Activated B cell treated with CpG ODN at 0.5 μM for 24 hours (primary cell): ENCODE measurements at regions of chr4 and their contacts with region 1.

Region 1: DNA sequence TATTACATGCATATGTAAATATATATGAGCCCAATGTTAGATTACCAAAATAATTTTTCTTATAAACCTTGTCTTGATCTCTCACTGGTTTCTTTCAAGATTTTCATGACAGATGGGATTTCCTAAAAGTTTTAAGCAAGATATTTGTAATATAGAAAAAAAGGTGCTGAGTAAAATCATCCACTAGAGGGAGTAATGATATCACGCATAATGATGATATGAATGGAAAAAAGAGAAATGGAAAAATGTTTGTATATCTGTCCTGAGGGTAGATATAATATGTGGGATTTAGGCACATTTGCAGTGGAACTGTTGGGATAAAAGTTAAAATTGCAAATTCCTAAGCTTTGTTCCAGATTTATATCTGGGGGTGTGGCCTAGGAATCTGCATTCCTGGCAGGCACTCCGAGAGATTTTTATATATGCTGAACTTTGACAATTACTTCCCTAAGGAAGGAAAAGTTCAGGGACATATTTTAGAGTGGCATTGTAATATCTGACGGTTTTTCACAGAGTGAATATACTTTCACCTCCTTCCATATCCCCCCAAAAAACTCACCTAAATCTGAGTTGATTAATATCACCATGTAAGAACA is 60.5 kb downstream of the TMA16 start:
- DNase-seq: no peak
- ATAC-seq: no peak
- H3K4me3 Mint-ChIP-seq: no peak overlapping the region
- H3K27ac Mint-ChIP-seq: peak overlapping the region; percentile 84
- H3K4me1 Mint-ChIP-seq: peaks cover 85% of the 10 kb centered on the region
- H3K27me3 Mint-ChIP-seq: no peaks in the 10 kb centered on the region
- CTCF ChIP-seq: peak; percentile 61

Region 2: DNA sequence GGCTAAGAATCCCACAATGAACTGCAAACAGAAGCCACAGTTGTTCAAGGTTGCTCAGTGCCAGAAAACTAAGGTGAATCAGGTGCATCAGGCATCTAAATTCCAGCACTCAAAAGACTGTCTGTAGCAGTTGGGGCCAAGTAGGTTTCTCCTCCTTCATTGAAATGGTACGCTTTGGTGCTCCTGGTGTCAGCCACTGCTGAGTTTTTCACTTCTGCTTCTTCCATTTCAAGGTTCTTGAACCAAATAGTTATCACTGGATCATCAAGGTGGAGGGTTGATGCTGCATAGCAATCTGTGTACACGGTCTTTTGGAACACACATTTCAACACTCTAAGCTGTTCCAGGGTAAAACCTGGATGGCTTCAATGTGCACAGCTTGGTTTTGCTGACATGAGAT is 13.9 kb after region 1 on chr4:
- CTCF ChIA-PET with region 1: interaction called, 9 read pairs
- POLR2A ChIA-PET with region 1: interaction called, 3 read pairs
- intact Hi-C with region 1: loop called (anchors 1 kb)
- DNase-seq: no peak
- ATAC-seq: peak; percentile 91
- H3K4me3 Mint-ChIP-seq: peak overlapping the region; percentile 54
- H3K27ac Mint-ChIP-seq: peak overlapping the region; percentile 80
- H3K4me1 Mint-ChIP-seq: peaks cover 82% of the 10 kb centered on the region
- H3K27me3 Mint-ChIP-seq: no peaks in the 10 kb centered on the region
- CTCF ChIP-seq: no peak

Region 3: DNA sequence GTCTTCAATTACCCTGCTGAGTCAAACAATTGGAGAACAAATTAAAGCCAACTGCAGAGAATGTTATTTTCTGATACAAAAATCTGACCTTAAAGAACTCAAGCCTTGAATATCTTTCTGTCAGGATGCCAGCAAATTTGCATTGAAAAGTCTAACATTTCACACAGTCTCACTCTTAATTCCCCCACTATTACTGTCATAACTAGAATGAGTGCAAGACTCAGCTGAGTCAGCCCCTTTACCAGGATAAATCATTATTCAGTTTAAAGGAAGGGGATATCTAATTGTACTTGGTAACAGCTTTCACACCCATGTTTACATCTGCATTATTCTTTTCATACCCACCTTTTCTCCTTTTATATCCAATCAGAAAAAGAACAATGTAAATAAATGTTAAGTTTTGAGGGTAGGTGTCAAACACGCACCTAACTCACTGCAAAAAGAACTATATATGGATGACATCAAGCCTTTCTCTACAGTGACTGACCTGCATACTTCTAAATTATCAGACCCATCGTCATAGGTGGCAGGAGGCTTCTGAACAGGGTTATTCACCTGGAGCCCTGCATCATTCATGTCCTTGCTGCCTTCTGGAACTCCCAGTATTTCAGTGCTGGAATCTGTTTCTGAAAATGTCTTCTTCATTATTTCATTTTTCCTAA is 56.9 kb after region 1 on chr4:
- CTCF ChIA-PET with region 1: interaction called, 49 read pairs
- POLR2A ChIA-PET with region 1: interaction called, 47 read pairs
- intact Hi-C with region 1: loop called (anchors 1 kb)
- DNase-seq: no peak
- ATAC-seq: peak; percentile 38
- H3K4me3 Mint-ChIP-seq: peak overlapping the region; percentile 89
- H3K27ac Mint-ChIP-seq: peak overlapping the region; percentile 98
- H3K4me1 Mint-ChIP-seq: peaks cover 74% of the 10 kb centered on the region
- H3K27me3 Mint-ChIP-seq: no peaks in the 10 kb centered on the region
- CTCF ChIP-seq: no peak

Region 4: DNA sequence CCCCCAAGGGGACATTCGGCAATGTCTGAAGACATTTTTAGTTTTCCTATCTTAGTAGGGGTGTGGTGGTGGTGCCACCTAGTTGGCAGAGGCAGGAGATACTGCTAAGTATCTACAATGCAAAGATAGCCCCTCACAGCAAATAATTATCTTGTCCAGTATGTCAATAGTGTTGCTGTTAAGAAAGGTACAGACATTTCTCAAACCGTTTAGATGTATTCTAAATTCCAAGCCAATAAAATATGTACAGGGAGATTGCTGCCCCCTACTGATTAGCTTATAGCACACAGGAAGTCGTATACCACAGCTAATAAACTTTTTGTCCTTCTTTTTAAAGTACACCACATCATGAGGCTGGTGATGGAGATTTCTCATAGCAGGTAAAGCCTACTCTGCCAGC is 200.0 kb after region 1 on chr4:
- CTCF ChIA-PET with region 1: interaction called, 167 read pairs
- POLR2A ChIA-PET with region 1: interaction called, 4 read pairs
- intact Hi-C with region 1: loop called (anchors 1 kb)
- DNase-seq: no peak
- ATAC-seq: peak; percentile 56
- H3K4me3 Mint-ChIP-seq: peak overlapping the region; percentile 8
- H3K27ac Mint-ChIP-seq: no peak overlapping the region
- H3K4me1 Mint-ChIP-seq: peaks cover 3% of the 10 kb centered on the region
- H3K27me3 Mint-ChIP-seq: peaks cover 4% of the 10 kb centered on the region
- CTCF ChIP-seq: no peak

Region 5: GRCh38 chr4:164012396-164013027 is 457.5 kb after region 1 on chr4:
- CTCF ChIA-PET with region 1: interaction called, 5 read pairs
- POLR2A ChIA-PET with region 1: no interaction called
- intact Hi-C with region 1: loop called (anchors 1 kb)
- DNase-seq: no peak
- ATAC-seq: no peak
- H3K4me3 Mint-ChIP-seq: no peak overlapping the region
- H3K27ac Mint-ChIP-seq: no peak overlapping the region
- H3K4me1 Mint-ChIP-seq: no peaks in the 10 kb centered on the region
- H3K27me3 Mint-ChIP-seq: no peaks in the 10 kb centered on the region
- CTCF ChIP-seq: no peak

Region 6: GRCh38 chr4:164748375-164748774 is 1193.4 kb after region 1 on chr4:
- CTCF ChIA-PET with region 1: no interaction called
- POLR2A ChIA-PET with region 1: interaction called, 7 read pairs
- intact Hi-C with region 1: loop called (anchors 1 kb)
- DNase-seq: no peak
- ATAC-seq: no peak
- H3K4me3 Mint-ChIP-seq: no peak overlapping the region
- H3K27ac Mint-ChIP-seq: no peak overlapping the region
- H3K4me1 Mint-ChIP-seq: no peaks in the 10 kb centered on the region
- H3K27me3 Mint-ChIP-seq: no peaks in the 10 kb centered on the region
- CTCF ChIP-seq: no peak